ENCODE measurements at regions of chr9 and their contacts with region 1.

Region 1: DNA sequence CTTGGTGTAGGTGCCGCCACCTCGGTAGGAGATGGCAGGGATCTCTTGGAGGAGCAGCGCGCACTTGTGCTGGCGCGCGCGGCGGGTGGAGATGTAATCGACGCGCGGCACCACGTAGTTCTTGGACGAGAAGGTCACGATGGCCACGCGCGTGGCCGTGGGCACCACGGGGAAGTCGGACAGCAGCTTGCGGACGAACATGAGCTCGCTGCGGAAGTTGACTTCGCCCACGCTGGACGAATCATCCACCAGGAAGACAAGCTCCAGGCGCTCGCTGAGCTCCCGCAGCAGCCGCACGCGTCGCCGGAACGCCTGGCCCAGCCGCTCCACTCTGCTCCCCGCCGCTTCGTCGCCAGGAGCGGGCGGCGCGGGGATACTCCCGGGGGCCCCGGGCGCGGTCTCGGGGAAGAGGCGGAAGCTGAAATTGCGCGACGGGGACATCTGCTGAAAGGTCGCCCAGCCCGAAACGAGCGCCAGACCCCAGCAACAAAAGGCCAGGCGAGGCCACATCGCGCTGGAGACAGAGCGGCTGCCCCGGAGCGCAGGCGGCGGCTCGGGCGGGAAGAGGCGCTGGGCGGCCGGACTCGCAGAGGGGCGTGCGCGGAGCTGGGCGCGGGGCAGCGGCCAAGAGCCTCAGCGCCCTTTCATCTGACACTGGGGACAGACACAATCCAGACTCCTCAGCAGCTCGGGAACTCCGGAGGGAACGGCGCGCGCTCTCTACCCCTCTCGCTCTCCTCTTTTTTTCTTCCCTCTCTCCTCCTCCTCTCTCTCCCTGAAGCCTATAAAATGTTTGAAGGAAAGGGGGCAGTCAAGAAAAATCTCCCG is at the start of gene SVEP1:
- DNase-seq: peak; percentile 72
- H3K4me3 ChIP-seq: peak within 1 kb of the TSS; percentile 65 to 78 (median 69)
- H3K27ac ChIP-seq: peak within 1 kb of the TSS; percentile 43
- H3K4me1 ChIP-seq: peaks cover 32% of the 10 kb centered on the region
- H3K27me3 ChIP-seq: no peaks in the 10 kb centered on the region
- CTCF ChIP-seq: no peak
- total RNA-seq, gene SVEP1: 4.5 to 29.8 TPM

Region 2: DNA sequence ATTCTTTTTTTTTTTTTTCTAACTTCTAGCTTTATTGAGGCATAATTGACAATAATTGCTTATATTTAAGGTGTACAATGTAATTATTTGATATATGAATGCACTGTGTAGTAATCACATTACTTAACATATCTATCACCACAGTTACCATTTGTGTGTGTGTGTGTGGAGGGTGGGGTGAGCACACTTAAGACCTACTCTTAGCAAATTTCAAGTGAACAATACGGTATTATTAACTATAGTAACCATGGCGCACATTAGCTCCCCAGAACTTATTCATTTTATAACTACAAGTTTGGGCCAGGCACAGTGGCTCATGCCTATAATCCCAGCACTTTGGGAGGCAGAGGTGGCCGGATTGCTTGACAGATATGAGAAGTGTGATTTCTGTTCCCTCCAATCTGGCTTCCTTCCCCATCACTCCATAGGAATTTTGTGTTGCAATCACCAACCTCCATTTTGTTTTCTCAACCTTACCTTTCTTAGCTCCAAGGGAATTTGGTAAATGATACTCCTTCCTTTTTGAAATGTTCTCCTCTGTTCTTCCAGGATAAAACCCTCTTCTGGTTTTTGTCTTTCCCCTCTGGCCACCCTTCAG is 337.9 kb before region 1 on chr9:
- CTCF ChIA-PET with region 1: no interaction called
- dilution Hi-C with region 1: no loop called
- in situ Hi-C with region 1: no loop called
- intact Hi-C with region 1: loop called (anchors 1 kb)
- DNase-seq: peak; percentile 44
- H3K4me3 ChIP-seq: no peak overlapping the region
- H3K27ac ChIP-seq: peak overlapping the region; percentile 38
- H3K4me1 ChIP-seq: peaks cover 13% of the 10 kb centered on the region
- H3K27me3 ChIP-seq: no peaks in the 10 kb centered on the region
- CTCF ChIP-seq: no peak

Region 3: GRCh38 chr9:110427497-110428104 is 151.6 kb before region 1 on chr9:
- CTCF ChIA-PET with region 1: interaction called, 5 read pairs
- dilution Hi-C with region 1: no loop called
- in situ Hi-C with region 1: no loop called
- intact Hi-C with region 1: loop called (anchors 5 kb)
- DNase-seq: peak; percentile 12
- H3K4me3 ChIP-seq: no peak overlapping the region
- H3K27ac ChIP-seq: no peak overlapping the region
- H3K4me1 ChIP-seq: no peaks in the 10 kb centered on the region
- H3K27me3 ChIP-seq: no peaks in the 10 kb centered on the region
- CTCF ChIP-seq: peak; percentile 68 to 73

Region 4: GRCh38 chr9:110443146-110443865 is 135.9 kb before region 1 on chr9:
- CTCF ChIA-PET with region 1: no interaction called
- dilution Hi-C with region 1: no loop called
- in situ Hi-C with region 1: no loop called
- intact Hi-C with region 1: loop called (anchors 5 kb)
- DNase-seq: peak; percentile 51
- H3K4me3 ChIP-seq: no peak overlapping the region
- H3K27ac ChIP-seq: no peak overlapping the region
- H3K4me1 ChIP-seq: peaks cover 18% of the 10 kb centered on the region
- H3K27me3 ChIP-seq: no peaks in the 10 kb centered on the region
- CTCF ChIP-seq: no peak

Region 5: DNA sequence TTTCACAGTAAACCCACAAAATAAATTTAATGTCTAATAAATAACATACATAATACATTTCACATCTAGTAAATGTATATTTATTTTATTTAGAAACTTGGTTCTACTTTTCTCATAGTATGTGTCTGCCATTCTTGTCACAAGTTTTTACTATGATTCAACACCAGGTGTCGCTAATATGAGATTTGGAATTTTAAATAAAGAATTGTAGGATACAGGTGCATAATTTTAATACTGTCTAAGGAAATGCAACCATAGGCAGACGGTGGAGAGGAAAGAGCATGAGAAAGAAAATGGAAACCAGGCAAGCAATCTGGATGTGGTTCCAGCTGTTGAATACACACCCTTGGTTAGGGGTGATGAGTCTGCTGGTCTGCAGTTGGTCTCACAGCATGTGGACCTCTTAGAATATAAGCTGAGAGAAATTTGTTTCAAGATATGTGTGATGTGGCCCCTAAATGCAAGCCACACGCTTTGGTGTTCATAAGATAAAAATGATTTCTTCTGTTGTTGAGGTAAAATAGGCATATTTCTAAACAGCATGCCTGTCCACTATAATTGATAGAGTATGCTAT is 126.9 kb before region 1 on chr9:
- CTCF ChIA-PET with region 1: no interaction called
- dilution Hi-C with region 1: no loop called
- in situ Hi-C with region 1: no loop called
- intact Hi-C with region 1: loop called (anchors 1 kb)
- DNase-seq: peak; percentile 4
- H3K4me3 ChIP-seq: no peak overlapping the region
- H3K27ac ChIP-seq: no peak overlapping the region
- H3K4me1 ChIP-seq: no peaks in the 10 kb centered on the region
- H3K27me3 ChIP-seq: no peaks in the 10 kb centered on the region
- CTCF ChIP-seq: peak; percentile 47 to 54

Region 6: DNA sequence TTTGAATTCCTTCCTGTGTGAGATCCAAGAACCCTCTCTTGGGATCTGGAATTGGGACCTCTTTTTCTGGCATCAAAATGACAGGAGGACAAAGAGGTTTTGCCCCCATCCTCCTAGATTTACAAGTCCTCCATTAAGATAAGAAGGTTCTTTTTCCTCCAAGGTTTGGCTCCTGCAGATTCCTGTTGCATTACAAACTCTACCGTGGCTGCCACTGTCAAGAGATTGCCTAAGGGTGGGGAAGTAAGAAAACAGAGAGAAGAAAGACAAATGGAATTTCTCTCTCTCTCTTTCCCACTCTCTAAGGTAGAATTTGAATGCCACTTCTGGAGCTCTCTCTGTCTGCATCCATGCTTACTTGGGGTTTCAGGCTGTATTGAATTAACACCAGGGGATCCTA is 12.3 kb after region 1 on chr9:
- CTCF ChIA-PET with region 1: no interaction called
- dilution Hi-C with region 1: no loop called
- in situ Hi-C with region 1: no loop called
- intact Hi-C with region 1: loop called (anchors 1 kb)
- DNase-seq: peak; percentile 43
- H3K4me3 ChIP-seq: no peak overlapping the region
- H3K27ac ChIP-seq: no peak overlapping the region
- H3K4me1 ChIP-seq: peaks cover 10% of the 10 kb centered on the region
- H3K27me3 ChIP-seq: no peaks in the 10 kb centered on the region
- CTCF ChIP-seq: no peak

Measured in mammary epithelial cell (primary cell).